Ovary (tissue), 10 donors: ENCODE measurements at regions of chr3 and their contacts with region 1.

Region 1: GRCh38 chr3:18149386-18149785 is 275.8 kb downstream of the SATB1 start:
- DNase-seq: no peak
- H3K4me3 ChIP-seq: no peak overlapping the region
- H3K27ac ChIP-seq: no peak overlapping the region
- H3K4me1 ChIP-seq: no peaks in the 10 kb centered on the region
- H3K27me3 ChIP-seq: no peaks in the 10 kb centered on the region
- CTCF ChIP-seq: no peak
- EP300 ChIP-seq: no peak
- POLR2A ChIP-seq: no peak

Region 2: DNA sequence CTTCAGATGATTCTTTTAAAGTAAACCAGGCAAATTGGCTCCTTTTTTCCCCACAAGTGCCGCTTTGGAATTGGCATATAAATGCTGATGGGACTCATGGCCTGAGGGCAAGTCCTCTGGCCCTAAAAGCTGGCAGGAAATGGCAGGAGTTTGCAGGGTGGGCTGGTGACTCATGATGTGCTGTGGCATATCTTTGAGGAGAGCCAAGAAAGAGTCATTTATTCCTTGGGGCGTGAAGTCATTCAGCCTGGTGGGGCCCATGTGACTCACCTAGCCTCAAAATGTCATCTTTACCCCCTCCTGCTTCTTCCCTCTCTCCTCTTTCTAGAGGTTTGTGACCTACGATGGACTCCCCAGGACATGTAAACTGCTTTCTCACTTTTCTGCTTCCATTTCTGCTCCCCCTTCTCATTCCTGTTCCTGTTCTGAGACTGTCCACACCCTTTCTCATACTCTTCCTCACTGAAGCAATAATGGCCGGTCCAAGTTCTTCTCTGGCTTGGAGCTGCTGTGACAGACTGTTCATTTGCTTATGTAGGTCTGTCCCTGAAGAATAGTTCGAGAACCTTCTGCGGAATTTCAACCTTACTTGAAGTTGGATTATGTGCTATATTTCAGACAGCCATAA is 50.3 kb before region 1 on chr3:
- intact Hi-C with region 1: no loop called
- DNase-seq: no peak
- H3K4me3 ChIP-seq: no peak overlapping the region
- H3K27ac ChIP-seq: no peak overlapping the region
- H3K4me1 ChIP-seq: no peaks in the 10 kb centered on the region
- H3K27me3 ChIP-seq: no peaks in the 10 kb centered on the region
- CTCF ChIP-seq: no peak
- EP300 ChIP-seq: no peak
- POLR2A ChIP-seq: no peak

Region 3: GRCh38 chr3:18127859-18128681 is 21.3 kb before region 1 on chr3:
- intact Hi-C with region 1: loop called in 1 of 4 experiments (anchors 2 kb)
- DNase-seq: no peak
- H3K4me3 ChIP-seq: no peak overlapping the region
- H3K27ac ChIP-seq: no peak overlapping the region
- H3K4me1 ChIP-seq: no peaks in the 10 kb centered on the region
- H3K27me3 ChIP-seq: no peaks in the 10 kb centered on the region
- CTCF ChIP-seq: no peak
- EP300 ChIP-seq: no peak
- POLR2A ChIP-seq: no peak

Region 4: DNA sequence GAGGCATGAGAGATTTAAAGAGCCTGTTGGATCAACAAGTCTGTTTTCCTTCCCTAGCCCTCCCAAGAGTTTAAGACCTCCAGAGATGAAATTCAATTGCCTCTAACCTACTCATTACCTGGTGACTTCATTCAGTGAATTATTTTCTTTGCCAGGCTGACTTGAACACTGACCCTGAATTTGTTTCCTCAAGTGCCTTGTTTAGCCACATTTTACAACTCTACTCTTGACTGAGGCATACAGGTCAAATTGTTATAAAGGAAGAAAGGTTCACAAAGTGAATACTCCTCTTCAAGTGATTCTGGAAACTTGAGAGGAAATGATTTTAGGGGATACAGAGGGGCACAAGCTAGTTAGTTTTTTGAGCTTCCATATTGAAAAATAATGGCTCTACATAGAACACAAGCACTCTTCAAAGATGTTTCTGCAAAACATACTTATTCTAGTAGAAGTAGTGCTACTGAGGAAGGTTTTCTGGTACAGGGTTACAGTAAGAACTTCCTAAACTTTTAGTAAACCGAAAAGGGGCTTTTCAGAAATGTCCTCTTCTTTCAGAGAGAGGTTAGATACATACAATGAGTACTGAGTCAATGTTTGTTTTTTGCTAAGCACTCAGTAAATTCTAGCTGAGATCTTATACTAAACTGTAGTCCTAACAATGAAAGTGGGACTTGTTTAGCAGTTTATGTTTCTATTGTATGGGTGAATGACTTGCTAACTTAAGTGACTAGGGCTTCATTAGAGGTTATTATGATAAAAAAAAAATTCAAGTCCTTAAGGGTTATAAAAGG is 413.2 kb after region 1 on chr3:
- intact Hi-C with region 1: no loop called
- DNase-seq: no peak
- H3K4me3 ChIP-seq: no peak overlapping the region
- H3K27ac ChIP-seq: no peak overlapping the region
- H3K4me1 ChIP-seq: no peaks in the 10 kb centered on the region
- H3K27me3 ChIP-seq: no peaks in the 10 kb centered on the region
- CTCF ChIP-seq: no peak
- EP300 ChIP-seq: no peak
- POLR2A ChIP-seq: no peak